ENCODE measurements at regions of chr10 and their contacts with region 1.

Region 1: DNA sequence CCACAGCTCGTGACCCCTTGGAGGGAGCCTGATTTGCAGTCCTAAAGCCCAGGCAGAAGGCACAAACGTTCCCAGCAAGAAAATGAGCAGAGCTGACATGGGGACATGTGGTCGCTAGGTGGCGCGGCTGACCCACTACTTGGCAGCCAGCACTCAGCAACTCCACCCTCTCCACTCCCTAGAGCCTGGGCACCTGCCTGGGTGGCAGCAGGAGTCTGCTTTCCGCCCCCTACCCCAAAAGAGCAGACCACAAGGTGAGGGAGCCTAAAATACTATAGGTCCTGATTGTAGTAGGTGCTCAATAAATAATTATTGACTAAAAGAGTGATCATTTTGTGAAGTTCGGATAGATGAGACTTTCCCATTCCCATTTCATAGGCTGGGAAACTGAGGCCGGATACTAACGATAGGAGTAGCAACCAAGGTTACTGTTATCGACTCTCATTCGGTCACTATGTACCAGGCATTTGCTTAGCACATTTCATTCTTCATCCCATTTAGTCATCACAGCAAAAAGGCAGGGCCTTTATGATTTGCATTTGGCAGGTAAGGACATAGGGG is 57.4 kb downstream of the NEUROG3 start:
- DNase-seq: peak; percentile 52 to 87
- ATAC-seq: peak; percentile 93

Region 2: DNA sequence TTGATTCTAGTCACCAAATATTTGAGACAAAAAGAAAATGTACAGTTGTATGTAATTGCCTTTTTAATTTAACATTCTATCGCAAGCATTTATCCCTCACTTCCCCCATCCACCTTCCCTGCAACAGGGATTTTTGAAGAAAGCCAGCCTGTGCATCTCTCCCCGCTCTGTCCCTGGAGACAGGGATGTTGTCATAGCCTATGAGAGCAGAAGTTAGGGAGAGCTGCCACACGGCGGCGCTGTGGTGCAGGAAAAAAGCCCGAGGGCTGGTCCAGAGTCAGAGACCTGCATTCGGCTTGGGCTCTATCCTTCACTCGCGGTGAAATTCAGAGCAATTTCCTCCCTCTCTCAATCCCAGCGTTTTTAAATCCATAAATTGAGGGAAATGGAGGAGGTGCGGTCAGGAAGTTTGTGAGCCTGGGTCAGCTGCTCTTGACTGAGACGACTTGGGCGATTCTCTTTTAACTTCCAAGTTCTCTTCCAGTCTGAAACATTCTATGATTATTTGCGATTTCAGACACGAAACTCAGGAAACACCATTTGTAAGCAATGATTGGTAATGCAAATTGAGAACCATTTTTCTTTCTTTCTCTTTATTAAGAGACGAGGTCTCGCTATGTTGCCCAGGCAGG is 278.1 kb before region 1 on chr10:
- intact Hi-C with region 1: loop called in 1 of 2 experiments (anchors 10 kb)
- DNase-seq: peak; percentile 69 to 89
- ATAC-seq: peak; percentile 79

Region 3: DNA sequence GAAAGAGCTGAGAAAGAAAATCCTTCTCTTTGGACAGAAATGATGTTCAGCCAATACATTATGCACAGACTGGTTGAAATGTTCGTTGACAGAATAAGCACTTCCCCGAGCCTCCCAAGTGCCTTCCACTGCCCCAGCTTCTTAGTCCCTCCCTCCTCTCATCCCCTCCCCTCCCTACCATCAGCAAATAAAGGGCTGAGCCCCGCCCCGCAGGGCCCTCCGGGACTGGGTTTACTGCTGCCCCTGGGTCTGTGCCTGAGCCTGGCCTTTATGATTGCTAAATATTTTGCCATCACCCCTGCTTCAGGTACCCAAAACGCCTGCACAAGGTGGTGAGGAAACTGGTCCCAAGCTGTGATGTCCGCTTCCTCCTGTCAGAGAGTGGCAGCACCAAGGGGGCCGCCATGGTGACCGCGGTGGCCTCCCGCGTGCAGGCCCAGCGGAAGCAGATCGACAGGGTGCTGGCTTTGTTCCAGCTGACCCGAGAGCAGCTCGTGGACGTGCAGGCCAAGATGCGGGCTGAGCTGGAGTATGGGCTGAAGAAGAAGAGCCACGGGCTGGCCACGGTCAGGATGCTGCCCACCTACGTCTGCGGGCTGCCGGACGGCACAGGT is 267.6 kb before region 1 on chr10:
- intact Hi-C with region 1: no loop called
- DNase-seq: no peak
- ATAC-seq: no peak